Left ventricle myocardium superior (tissue), 1 donor: ENCODE measurements at regions of chr4 and their contacts with region 1.

Region 1: DNA sequence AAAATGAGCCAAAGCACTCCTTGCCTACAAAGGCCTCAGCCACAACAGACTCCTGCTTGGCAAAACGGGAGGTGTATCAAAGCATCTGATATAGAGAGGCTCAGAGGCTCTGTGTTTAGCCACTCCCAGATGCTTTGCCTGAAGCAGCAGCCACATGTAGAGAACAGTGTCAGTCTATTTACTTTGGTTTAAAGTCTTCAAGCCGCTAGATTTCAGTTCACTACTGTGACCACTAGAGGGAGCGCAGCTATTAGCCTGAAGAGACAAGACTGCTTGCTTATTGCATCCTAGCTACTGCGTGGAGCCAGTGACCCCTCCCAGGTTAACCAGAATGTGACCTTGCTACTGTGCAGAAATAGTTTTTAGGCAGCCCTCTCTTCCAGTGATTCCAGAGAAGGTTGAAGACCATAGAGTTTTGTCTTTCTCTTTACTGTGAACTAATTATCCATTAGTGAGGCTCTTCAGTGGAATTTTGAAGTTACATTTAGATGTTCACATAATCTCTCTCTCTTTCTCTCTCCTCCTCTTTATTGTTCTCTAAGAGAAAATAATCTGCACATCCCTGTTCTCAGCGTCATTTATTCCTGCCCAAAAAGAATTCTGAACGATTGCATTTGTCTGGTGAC is 39.3 kb downstream of the BMP3 start:
- DNase-seq: no peak
- ATAC-seq: peak; percentile 74

Region 2: DNA sequence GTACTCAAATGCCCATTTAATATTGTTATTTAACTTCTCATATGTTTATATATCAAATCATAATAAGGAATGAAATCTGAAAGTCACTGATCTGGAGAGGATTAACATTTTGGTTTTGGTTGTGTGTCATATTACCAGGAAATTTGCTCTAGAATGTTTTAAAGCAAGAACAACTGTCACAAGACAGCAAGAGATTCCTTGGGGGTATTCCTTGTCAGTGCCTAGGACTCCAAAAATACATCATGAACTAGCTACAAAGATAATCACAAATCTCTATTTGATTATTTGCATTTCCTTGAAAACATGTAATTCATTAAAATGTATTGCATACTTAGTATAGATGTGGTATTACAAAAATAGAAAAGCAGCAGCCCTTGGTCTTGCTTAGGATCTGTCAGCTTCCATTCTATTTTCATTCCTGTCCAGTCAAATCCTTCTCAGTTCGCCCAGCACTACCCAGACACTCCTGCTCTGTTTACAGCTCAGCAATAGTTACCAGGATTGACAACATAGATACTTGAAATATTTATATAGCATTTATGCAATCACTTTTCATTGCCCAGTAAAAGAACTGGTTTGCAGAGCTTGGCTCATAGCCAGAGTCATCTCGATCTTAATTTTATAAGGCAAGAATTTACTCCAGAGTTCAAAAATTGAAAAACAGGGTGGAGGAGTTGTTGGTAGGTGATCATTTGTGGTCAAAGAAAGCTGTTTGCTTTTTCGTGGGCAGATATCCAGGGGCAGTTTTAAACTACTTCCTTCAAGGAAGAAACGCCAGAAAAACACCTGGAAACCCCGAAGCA is 48.5 kb before region 1 on chr4:
- intact Hi-C with region 1: no loop called
- DNase-seq: no peak
- ATAC-seq: no peak

Region 3: DNA sequence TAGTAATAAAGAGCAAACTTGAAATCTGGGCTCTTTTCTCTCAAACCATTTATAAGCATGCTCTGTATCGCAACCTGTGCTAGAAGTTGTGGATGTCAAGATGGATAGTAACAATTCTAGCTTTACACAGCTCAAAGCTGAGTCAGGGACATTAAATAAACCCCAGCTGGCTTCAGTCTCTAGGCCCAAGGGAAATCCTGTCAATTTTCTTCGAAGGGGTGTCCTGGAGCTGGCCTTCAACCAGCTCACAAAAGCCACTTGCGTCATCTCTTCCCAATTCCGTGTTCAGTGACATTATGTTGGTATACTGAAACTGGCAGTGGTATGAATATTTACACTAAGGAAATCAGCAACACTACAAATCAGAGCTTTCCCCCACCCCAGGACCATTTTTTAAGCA is 235.1 kb after region 1 on chr4:
- intact Hi-C with region 1: no loop called
- DNase-seq: no peak
- ATAC-seq: no peak

Region 4: GRCh38 chr4:81351654-81352445 is 282.0 kb after region 1 on chr4:
- intact Hi-C with region 1: loop called (anchors 2 kb)
- DNase-seq: peak; percentile 63
- ATAC-seq: peak; percentile 70